Mammary epithelial cell (primary cell): ENCODE measurements at regions of chr10 and their contacts with region 1.

Region 1: DNA sequence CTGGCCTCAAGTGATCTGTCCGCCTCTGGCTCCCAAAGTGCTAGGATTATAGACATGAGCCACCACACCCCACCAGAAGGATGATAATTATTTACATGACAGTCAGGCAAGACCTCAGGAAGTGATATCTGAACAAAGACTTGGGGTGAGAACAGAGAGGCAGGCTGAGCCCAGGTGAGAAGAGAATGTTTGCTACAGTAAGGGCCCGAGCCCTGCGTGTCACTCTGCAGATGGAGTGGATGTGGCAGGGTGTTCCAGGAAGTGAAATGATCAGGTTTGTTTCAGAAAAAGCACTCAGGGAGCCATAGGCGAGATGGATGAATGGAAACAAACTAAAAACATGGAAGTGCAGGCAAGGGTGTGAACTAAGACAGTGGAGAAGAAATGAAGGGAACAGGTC is 22.2 kb downstream of the SFMBT2 start:
- DNase-seq: no peak
- H3K4me3 ChIP-seq: no peak overlapping the region
- H3K27ac ChIP-seq: no peak overlapping the region
- H3K4me1 ChIP-seq: no peaks in the 10 kb centered on the region
- H3K27me3 ChIP-seq: no peaks in the 10 kb centered on the region
- CTCF ChIP-seq: no peak

Region 2: DNA sequence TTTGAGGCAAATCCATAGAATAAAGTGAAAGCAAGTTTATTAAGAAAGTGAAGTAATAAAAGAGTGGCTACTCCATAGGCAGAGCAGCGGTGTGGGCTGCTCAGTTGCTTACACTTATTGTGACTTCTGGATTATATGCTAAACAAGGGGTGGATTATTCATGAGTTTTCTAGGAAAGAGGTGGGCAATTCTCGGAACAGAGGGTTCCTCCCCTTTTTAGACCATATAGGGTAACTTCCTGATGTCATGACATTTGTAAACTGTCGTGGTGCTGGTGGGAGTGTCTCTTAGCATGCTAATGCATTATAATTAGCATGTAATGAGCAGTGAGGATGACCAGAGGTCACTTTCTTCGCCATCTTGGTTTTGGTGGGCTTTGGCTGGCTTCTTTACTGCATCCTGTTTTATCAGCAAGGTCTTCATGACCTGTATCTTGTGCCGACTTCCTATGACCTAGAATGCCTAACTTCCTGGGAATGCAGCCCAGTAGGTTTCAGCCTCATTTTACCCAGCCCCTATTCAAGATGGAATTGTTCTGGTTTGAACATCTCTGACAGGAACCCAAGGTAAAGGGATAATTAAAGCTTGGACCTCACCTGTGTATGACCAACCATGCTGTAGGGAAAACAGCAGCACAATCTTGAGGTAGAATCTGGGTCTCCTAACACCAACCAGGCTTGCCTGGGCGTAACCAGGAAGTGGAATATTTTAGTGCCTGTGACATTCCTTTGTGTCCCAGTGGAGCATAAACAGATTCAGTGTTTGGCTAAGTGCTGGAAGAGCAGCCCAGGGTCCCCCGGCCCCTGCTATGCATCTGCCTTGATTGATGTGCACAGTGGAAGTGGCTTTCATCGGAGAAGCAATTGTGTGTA is 1091.9 kb before region 1 on chr10:
- CTCF ChIA-PET with region 1: no interaction called
- dilution Hi-C with region 1: no loop called
- in situ Hi-C with region 1: no loop called
- intact Hi-C with region 1: no loop called
- DNase-seq: no peak
- H3K4me3 ChIP-seq: no peak overlapping the region
- H3K27ac ChIP-seq: no peak overlapping the region
- H3K4me1 ChIP-seq: peaks cover 44% of the 10 kb centered on the region
- H3K27me3 ChIP-seq: no peaks in the 10 kb centered on the region
- CTCF ChIP-seq: no peak

Region 3: DNA sequence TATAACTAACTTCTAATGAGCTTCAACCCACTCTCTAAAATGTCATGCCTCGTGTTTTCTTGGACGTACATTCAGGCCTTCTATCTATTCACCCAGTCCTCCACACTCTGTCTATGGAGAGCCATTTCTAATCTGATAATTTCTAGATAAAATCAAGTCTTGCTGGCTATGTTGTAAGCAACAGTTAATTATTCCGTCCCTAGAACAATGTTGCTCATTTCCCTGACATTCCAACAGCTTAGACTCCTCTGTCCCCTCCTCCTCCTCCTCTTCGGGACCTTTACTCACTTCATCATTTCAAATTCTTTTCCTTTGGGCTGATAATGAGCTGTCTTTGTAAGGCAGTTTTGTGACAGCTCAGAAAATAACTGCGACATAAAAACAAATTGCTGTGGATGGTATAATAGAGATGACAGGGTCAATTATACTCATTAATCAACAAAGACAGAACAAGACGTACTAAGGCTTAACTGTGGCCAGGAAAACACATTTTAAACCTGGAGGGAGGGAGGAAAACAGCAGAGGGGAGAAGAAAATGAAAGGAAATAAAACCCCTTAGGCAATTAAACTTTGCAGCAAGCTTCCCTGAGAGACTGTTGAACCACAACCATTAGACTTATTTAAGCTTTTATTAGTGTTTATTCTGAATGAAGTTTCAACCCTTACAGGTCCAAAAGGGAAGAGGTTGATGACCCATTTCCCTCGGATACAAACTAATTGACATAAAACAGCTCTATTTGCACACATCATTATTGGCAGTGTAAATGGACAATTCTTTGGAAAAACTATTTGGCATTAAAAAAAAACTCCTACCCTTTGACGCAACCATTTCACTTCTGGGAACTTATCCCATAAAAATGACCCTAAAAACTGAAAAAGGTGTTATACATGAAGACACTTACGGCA is 156.8 kb before region 1 on chr10:
- CTCF ChIA-PET with region 1: no interaction called
- dilution Hi-C with region 1: no loop called
- in situ Hi-C with region 1: no loop called
- intact Hi-C with region 1: no loop called
- DNase-seq: no peak
- H3K4me3 ChIP-seq: no peak overlapping the region
- H3K27ac ChIP-seq: no peak overlapping the region
- H3K4me1 ChIP-seq: no peaks in the 10 kb centered on the region
- H3K27me3 ChIP-seq: no peaks in the 10 kb centered on the region
- CTCF ChIP-seq: no peak

Region 4: DNA sequence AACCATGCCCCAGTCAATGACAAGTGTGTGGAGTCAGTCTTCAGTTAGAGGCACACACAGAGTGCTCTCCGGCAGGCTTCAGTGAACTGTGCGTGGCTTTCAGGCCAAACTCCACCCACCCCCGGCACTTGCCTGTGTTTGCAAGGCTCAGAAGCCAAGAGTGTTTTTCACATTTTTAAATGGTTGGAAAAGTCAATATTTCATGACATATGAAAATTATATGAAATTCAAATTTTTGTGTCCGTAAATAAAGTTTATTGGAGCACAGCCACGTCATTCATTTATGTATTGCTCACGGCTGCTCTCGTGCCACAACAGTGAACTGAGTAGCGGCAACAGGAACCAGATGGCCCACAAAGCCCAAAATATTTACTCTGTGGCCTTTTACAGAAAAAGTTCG is 82.5 kb before region 1 on chr10:
- CTCF ChIA-PET with region 1: no interaction called
- dilution Hi-C with region 1: loop called (anchors 5 kb)
- in situ Hi-C with region 1: no loop called
- intact Hi-C with region 1: no loop called
- DNase-seq: no peak
- H3K4me3 ChIP-seq: no peak overlapping the region
- H3K27ac ChIP-seq: no peak overlapping the region
- H3K4me1 ChIP-seq: no peaks in the 10 kb centered on the region
- H3K27me3 ChIP-seq: no peaks in the 10 kb centered on the region
- CTCF ChIP-seq: no peak